ENCODE measurements at regions of chr6 and their contacts with region 1.

Region 1: DNA sequence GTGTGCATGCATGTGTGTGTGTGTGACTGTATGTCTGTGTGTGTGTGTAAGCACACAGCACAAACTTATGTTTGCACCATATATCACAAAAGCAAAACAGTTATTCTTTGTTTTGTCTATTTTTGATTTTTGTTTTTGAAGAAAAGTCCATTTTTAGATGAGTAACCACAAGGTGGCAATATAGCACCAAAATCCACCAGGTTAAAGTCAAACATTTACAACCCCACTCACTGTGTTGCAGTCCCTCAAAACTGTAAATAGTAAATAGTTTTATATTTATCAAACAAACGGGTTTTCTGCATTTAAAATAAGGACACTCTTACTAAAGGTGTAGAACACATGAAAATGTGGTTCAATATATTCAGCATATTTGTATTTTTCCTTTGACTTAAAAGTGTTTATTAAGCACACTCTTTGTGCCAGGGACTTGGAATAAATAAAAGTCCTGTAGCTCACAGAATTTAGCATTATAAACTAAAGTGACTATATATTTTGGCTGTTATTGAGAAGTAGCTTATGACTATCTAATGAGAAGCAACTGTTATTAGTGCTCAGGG is 118.5 kb downstream of the GFRAL start:
- DNase-seq: peak; percentile 45
- ATAC-seq: peak; percentile 48; the same call in 1 of the 2 replicates
- H3K4me3 ChIP-seq: no peak overlapping the region
- H3K27ac ChIP-seq: no peak overlapping the region
- H3K4me1 ChIP-seq: peaks cover 1% of the 10 kb centered on the region
- H3K27me3 ChIP-seq: no peaks in the 10 kb centered on the region
- CTCF ChIP-seq: peak; percentile 66
- POLR2A ChIP-seq: no peak
- RAD21 ChIP-seq: peak; percentile 74

Region 2: DNA sequence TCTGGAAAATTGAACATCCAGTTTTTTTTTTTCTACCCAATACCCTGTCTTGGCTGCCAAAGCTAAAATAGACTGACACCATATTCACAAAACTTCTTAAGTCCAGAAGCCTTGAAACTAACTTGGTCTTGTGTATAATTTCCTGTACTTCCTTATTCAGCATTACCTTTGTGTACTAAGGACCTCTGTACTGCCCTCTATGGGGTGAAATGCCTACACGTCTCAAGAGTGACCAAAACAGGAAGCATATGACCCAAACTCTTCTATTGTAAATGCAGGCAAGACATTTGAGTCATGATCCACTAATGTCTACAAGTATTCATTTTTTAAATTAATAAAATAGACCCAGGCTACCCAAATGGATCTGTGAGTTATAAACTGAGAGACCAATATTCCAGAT is 82.9 kb after region 1 on chr6:
- CTCF ChIA-PET with region 1: no interaction called
- POLR2A ChIA-PET with region 1: no interaction called
- dilution Hi-C with region 1: no loop called
- in situ Hi-C with region 1: no loop called
- intact Hi-C with region 1: loop called (anchors 1 kb)
- DNase-seq: peak; percentile 37
- ATAC-seq: peak; percentile 53
- H3K4me3 ChIP-seq: no peak overlapping the region
- H3K27ac ChIP-seq: no peak overlapping the region
- H3K4me1 ChIP-seq: no peaks in the 10 kb centered on the region
- H3K27me3 ChIP-seq: no peaks in the 10 kb centered on the region
- CTCF ChIP-seq: peak; percentile 40
- POLR2A ChIP-seq: no peak
- RAD21 ChIP-seq: peak; percentile 16; the same call in 1 of the 2 replicates

Region 3: GRCh38 chr6:55886185-55886836 is 440.6 kb after region 1 on chr6:
- CTCF ChIA-PET with region 1: interaction called, 5 read pairs
- POLR2A ChIA-PET with region 1: no interaction called
- dilution Hi-C with region 1: no loop called
- in situ Hi-C with region 1: loop called (anchors 10 kb)
- intact Hi-C with region 1: loop called (anchors 1 kb)
- DNase-seq: peak; percentile 24
- ATAC-seq: no peak; the same call in 1 of the 2 replicates
- H3K4me3 ChIP-seq: no peak overlapping the region
- H3K27ac ChIP-seq: peak overlapping the region; percentile 78; the same call in 1 of the 2 replicates
- H3K4me1 ChIP-seq: 0 out of 2 replicates have a peak, but pooled peaks cover 2% of the 10 kb centered on the region
- H3K27me3 ChIP-seq: no peaks in the 10 kb centered on the region
- CTCF ChIP-seq: peak; percentile 57
- POLR2A ChIP-seq: no peak
- RAD21 ChIP-seq: peak; percentile 60

Region 4: DNA sequence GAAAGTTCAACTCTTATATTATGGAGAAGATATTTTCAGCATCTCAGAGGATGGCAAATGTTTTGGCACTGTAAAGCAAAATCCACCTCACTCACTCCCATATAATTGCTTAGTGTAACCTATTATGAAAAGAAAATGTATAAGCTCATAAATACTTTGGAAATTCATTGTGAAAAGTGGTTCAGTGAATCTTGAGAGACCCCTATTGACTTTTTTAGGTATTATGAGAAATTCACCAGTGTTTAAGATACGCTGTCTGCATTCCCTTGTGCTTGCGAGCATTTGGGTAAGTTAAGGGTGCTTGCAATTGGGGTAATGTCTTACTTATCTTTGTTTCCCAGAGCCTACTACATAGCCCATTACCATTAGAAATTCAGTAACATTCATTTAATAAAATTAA is 496.0 kb after region 1 on chr6:
- CTCF ChIA-PET with region 1: interaction called, 7 read pairs
- POLR2A ChIA-PET with region 1: no interaction called
- dilution Hi-C with region 1: no loop called
- in situ Hi-C with region 1: loop called (anchors 10 kb)
- intact Hi-C with region 1: loop called (anchors 1 kb)
- DNase-seq: peak; percentile 37
- ATAC-seq: peak; percentile 49; the same call in 1 of the 2 replicates
- H3K4me3 ChIP-seq: no peak overlapping the region
- H3K27ac ChIP-seq: no peak overlapping the region
- H3K4me1 ChIP-seq: peaks cover 4% of the 10 kb centered on the region
- H3K27me3 ChIP-seq: no peaks in the 10 kb centered on the region
- CTCF ChIP-seq: peak; percentile 59
- POLR2A ChIP-seq: no peak
- RAD21 ChIP-seq: peak; percentile 67

Region 5: DNA sequence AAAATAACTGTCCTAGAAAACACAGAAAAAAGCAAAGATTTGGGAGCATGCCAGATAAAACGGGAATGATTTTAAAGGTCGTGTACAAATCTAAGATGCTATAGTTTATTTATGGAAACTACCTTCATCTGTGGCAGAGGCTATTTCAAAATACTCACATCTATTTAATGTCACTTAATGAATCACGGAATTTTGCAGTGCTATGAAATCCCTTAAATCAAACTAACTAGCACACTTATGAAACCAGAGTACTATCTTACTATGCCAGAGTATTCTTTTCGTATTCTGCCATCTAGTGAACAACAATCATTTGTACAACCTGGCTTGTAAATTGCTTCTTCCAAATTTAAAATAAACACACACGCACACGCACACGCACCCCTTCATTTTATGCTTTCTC is 507.6 kb after region 1 on chr6:
- CTCF ChIA-PET with region 1: interaction called, 5 read pairs
- POLR2A ChIA-PET with region 1: no interaction called
- dilution Hi-C with region 1: no loop called
- in situ Hi-C with region 1: no loop called
- intact Hi-C with region 1: loop called (anchors 1 kb)
- DNase-seq: peak; percentile 74
- ATAC-seq: peak; percentile 93
- H3K4me3 ChIP-seq: no peak overlapping the region
- H3K27ac ChIP-seq: no peak overlapping the region
- H3K4me1 ChIP-seq: no peaks in the 10 kb centered on the region; the same call in 1 of the 2 replicates
- H3K27me3 ChIP-seq: no peaks in the 10 kb centered on the region
- CTCF ChIP-seq: peak; percentile 66
- POLR2A ChIP-seq: no peak
- RAD21 ChIP-seq: peak; percentile 80

Region 6: GRCh38 chr6:56292505-56293181 is 846.9 kb after region 1 on chr6:
- CTCF ChIA-PET with region 1: no interaction called
- POLR2A ChIA-PET with region 1: no interaction called
- dilution Hi-C with region 1: no loop called
- in situ Hi-C with region 1: loop called (anchors 25 kb)
- intact Hi-C with region 1: loop called (anchors 2 kb)
- DNase-seq: peak; percentile 62
- ATAC-seq: peak; percentile 92
- H3K4me3 ChIP-seq: no peak overlapping the region
- H3K27ac ChIP-seq: no peak overlapping the region
- H3K4me1 ChIP-seq: no peaks in the 10 kb centered on the region
- H3K27me3 ChIP-seq: no peaks in the 10 kb centered on the region; the same call in 1 of the 2 replicates
- CTCF ChIP-seq: peak; percentile 79
- POLR2A ChIP-seq: no peak
- RAD21 ChIP-seq: peak; percentile 90